Activated CD8-positive, alpha-beta T cell treated with anti-CD3 and anti-CD28 coated beads, Interleukin-2, amount 10 ng/mL, durations not matched to agents 7 days and 5 days (primary cell): ENCODE measurements at regions of chr17 and their contacts with region 1.

Region 1: DNA sequence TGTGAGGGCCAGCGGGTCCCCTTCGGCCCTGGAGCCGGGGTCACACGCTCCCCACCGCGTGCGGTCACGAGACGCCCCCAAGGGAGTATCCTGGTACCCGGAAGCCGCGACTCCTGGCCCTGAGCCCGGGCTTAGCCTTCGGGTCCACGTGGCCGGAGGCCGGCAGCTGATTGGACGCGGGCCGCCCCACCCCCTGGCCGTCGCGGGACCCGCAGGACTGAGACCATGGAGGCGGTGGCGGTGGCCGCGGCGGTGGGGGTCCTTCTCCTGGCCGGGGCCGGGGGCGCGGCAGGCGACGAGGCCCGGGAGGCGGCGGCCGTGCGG is at the start of gene NAGLU:
- DNase-seq: peak; percentile 88
- ATAC-seq: peak; percentile 91
- H3K4me3 Mint-ChIP-seq: peak within 1 kb of the TSS; percentile 87
- H3K27ac Mint-ChIP-seq: peak within 1 kb of the TSS; percentile 87
- H3K4me1 Mint-ChIP-seq: peaks cover 59% of the 10 kb centered on the region
- H3K27me3 Mint-ChIP-seq: peaks cover 7% of the 10 kb centered on the region
- total RNA-seq, gene NAGLU: 19.3 to 20.5 TPM

Region 2: DNA sequence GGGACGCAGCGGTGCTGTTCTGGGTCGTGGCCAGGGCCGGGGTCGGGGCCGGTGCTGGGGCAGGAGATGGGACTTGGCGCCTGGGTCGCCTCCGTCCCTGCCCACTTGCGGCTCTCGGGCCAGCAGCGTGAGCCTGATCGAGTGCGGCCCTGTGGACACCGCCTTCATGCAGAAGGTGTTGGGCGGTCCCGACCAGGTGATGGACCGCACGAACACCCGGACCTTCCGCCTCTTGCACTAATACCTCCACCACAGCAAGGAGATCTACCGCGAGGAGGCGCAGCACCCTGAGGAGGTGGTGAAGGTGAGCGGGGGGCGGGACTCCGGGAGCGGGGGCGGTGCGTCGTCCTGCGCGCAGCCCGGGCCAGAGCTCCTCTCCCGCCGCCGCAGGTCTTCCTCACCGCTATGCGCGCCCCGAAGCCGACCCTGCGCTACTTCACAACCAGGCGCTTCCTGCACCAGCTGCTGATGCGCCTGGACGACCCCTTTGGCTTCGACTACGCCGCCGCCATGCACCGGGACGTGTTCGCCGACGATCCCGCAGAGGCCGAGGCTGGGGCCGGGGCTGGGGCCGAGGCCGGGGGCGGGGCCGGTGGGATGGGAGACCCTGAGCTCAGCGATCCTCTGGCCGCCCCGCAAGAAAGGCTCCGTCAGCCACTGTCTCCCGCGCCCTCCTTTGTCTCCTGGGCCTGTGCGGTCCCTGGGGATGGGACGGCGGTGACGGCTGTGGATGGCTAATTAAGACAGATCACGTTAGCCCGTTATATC is 12.2 kb after region 1 on chr17:
- CTCF ChIA-PET with region 1: interaction called, 15 read pairs
- POLR2A ChIA-PET with region 1: interaction called, 4 read pairs
- DNase-seq: peak; percentile 84
- ATAC-seq: peak; percentile 89
- H3K4me3 Mint-ChIP-seq: peak overlapping the region; percentile 38
- H3K27ac Mint-ChIP-seq: no peak overlapping the region
- H3K4me1 Mint-ChIP-seq: peaks cover 22% of the 10 kb centered on the region
- H3K27me3 Mint-ChIP-seq: no peaks in the 10 kb centered on the region